ENCODE measurements at regions of chr1 and their contacts with region 1.

Region 1: DNA sequence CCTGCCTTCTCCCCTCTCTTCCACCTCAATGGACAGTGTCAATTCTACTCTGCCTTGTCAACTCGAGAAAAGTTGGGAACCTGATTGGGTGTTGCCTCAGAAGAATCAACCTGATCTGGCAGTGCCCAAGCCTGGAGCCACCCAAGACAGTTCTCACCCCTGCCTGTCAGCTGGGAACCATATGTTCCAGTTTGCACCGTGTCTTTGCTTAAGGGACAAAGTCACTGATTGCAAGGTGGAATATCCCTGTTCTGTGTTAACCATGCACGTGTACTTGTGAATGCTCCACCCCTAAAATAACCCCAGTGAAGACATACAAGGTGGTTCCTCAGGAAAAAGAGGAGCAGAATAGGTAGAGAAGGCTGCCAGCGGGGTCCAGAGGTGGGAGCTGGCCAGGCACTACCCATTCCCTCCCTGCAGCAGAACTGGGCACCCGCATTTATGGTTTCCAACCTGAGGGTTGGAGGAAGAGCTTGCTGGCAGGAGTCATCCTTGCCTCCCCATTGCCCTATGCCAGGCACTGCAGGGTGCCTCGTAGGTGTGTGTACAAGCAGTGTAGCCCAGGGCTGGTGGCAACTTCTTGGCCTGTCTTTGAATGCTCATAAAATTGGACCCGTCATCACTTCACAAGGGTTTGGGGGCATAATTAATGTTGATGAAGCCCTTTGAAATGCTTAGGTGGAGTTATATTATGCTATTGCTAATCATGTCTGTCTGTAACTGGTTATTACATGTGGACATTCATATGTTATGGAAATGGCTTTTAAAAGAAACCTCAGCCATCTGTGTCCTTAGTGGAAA is 11.3 kb downstream of the NIPAL3 start:
- DNase-seq: no peak
- H3K4me3 ChIP-seq: no peak overlapping the region
- H3K27ac ChIP-seq: no peak overlapping the region
- H3K4me1 ChIP-seq: no peaks in the 10 kb centered on the region
- H3K27me3 ChIP-seq: no peaks in the 10 kb centered on the region
- CTCF ChIP-seq: no peak
- POLR2A ChIP-seq: no peak

Region 2: GRCh38 chr1:24514946-24515345 is 88.0 kb after region 1 on chr1:
- intact Hi-C with region 1: loop called (anchors 5 kb)
- DNase-seq: no peak
- H3K4me3 ChIP-seq: no peak overlapping the region
- H3K27ac ChIP-seq: peak overlapping the region in 1 of 2 donors; percentile 61
- H3K4me1 ChIP-seq: no peaks in the 10 kb centered on the region
- H3K27me3 ChIP-seq: no peaks in the 10 kb centered on the region
- CTCF ChIP-seq: no peak
- POLR2A ChIP-seq: no peak

Region 3: DNA sequence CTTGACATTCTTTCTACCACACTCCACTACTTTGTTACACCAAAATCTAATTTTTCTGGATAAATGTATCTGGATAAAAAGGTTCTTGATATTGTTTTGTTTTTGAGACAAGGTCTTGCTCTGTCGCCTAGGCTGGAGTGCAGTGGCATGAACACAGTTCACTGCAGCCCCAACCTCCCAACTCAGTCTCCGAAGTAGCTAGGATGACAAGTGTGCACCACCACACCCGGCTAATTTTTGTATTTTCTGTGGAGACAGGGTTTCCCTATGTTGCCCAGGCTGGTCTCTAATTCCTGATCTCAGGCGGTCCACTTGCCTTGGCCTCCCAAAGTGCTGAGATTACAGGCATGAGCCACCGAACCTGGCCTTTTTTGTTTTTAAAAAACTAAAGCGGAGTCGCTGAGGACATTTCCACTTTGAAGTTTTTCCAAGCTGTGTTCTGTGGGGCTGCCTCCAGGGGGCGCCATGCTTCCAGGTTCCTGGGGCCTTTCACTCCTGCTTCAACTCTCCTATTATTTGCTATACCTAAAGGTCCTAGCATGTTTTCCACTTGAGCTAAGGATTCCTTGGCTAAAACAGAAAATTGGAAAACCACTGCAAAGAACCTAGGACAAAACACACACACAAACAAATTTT is 114.9 kb after region 1 on chr1:
- intact Hi-C with region 1: no loop called
- DNase-seq: no peak
- H3K4me3 ChIP-seq: no peak overlapping the region
- H3K27ac ChIP-seq: peak overlapping the region in 1 of 2 donors; percentile 23
- H3K4me1 ChIP-seq: no peaks in the 10 kb centered on the region
- H3K27me3 ChIP-seq: no peaks in the 10 kb centered on the region
- CTCF ChIP-seq: peak in 2 of 3 donors; percentile 19 to 22
- POLR2A ChIP-seq: no peak